ENCODE measurements at regions of chr1 and their contacts with region 1.

Region 1: DNA sequence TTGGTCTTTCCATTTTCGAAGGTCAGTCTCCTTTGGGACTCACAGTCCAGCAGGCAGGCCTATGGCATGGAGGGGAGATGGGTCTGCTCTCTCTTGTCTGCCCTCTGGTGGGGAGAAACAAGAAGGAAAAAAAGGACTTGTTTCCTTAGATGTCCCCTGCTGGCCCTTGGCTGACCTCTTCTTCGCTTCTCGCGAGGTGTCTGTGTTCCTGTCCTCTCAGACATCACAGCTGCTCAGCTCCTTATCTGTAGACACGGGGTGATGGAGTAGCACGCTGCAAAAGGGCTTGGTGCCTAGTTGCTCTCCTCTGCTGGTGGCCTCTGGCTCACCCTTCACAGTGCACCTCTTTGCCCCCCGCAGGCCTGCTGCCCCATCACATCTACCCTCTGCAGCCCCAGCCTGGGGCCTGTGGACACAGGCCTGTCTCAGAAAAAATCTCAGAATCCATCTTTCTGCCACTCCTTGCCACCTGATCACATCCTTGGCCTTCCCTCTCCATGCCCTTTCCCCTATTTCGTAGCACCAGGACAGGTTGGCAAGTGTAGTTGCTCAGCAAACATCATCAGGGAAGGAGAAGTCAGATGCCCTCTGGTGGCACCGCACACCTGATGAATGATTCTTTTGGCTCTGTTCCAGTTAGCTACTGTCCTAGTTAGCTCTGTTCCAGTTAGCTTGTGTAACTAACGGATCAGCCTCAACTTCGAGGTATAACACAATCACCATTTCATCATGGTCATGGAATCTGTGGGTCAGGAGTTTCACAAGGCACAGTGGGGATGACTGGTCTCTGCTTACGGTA is 18.7 kb upstream of the AK2 start:
- DNase-seq: peak in 4 of 9 experiments; percentile 12 to 72 (median 56)
- ATAC-seq: peak; percentile 38
- H3K4me3 ChIP-seq: no peak overlapping the region
- H3K4me3 Mint-ChIP-seq: no peak overlapping the region
- H3K27ac ChIP-seq: no peak overlapping the region
- H3K27ac Mint-ChIP-seq: no peak overlapping the region
- H3K4me1 ChIP-seq: no peaks in the 10 kb centered on the region
- H3K4me1 Mint-ChIP-seq: peaks cover 2% of the 10 kb centered on the region
- H3K27me3 ChIP-seq: no peaks in the 10 kb centered on the region
- H3K27me3 Mint-ChIP-seq: peaks cover 6% of the 10 kb centered on the region
- CTCF ChIP-seq: peak; percentile 41

Region 2: GRCh38 chr1:32925403-32926162 is 129.8 kb before region 1 on chr1:
- CTCF ChIA-PET with region 1: interaction called, 81 read pairs
- POLR2A ChIA-PET with region 1: no interaction called
- intact Hi-C with region 1: no loop called
- DNase-seq: peak in 4 of 9 experiments; percentile 10 to 48 (median 26)
- ATAC-seq: peak; percentile 61
- H3K4me3 ChIP-seq: peak overlapping the region in 1 of 2 experiments; percentile 5
- H3K4me3 Mint-ChIP-seq: peak overlapping the region; percentile 59
- H3K27ac ChIP-seq: no peak overlapping the region
- H3K27ac Mint-ChIP-seq: no peak overlapping the region
- H3K4me1 ChIP-seq: peaks cover 13% of the 10 kb centered on the region
- H3K4me1 Mint-ChIP-seq: peaks cover 18% of the 10 kb centered on the region
- H3K27me3 ChIP-seq: peaks cover 20 to 24% of the 10 kb centered on the region in 2 experiments
- H3K27me3 Mint-ChIP-seq: peaks cover 51% of the 10 kb centered on the region
- CTCF ChIP-seq: no peak

Region 3: GRCh38 chr1:33045246-33045645 is 10.2 kb before region 1 on chr1:
- CTCF ChIA-PET with region 1: interaction called, 16 read pairs
- POLR2A ChIA-PET with region 1: no interaction called
- intact Hi-C with region 1: no loop called
- DNase-seq: peak in 1 of 9 experiments; percentile 15
- ATAC-seq: no peak
- H3K4me3 ChIP-seq: no peak overlapping the region
- H3K4me3 Mint-ChIP-seq: no peak overlapping the region
- H3K27ac ChIP-seq: peak overlapping the region in 1 of 2 experiments; percentile 2
- H3K27ac Mint-ChIP-seq: peak overlapping the region; percentile 3
- H3K4me1 ChIP-seq: no peaks in the 10 kb centered on the region
- H3K4me1 Mint-ChIP-seq: peaks cover 8% of the 10 kb centered on the region
- H3K27me3 ChIP-seq: peaks cover 0 to 4% of the 10 kb centered on the region in 2 experiments
- H3K27me3 Mint-ChIP-seq: no peaks in the 10 kb centered on the region
- CTCF ChIP-seq: no peak

Measured in CD8-positive, alpha-beta T cell (primary cell).